Activated naive CD4-positive, alpha-beta T cell treated with anti-CD3 and anti-CD28 coated beads, Interleukin-2, amount 10 ng/mL, durations not matched to agents 7 days and 5 days (primary cell): ENCODE measurements at regions of chr2 and their contacts with region 1.

Region 1: GRCh38 chr2:54522624-54523281 is 66.6 kb downstream of the SPTBN1 start:
- DNase-seq: peak; percentile 74
- H3K4me3 Mint-ChIP-seq: peak overlapping the region; percentile 27
- H3K27ac Mint-ChIP-seq: peak overlapping the region; percentile 67
- H3K4me1 Mint-ChIP-seq: peaks cover 19% of the 10 kb centered on the region
- H3K27me3 Mint-ChIP-seq: peaks cover 17% of the 10 kb centered on the region

Region 2: DNA sequence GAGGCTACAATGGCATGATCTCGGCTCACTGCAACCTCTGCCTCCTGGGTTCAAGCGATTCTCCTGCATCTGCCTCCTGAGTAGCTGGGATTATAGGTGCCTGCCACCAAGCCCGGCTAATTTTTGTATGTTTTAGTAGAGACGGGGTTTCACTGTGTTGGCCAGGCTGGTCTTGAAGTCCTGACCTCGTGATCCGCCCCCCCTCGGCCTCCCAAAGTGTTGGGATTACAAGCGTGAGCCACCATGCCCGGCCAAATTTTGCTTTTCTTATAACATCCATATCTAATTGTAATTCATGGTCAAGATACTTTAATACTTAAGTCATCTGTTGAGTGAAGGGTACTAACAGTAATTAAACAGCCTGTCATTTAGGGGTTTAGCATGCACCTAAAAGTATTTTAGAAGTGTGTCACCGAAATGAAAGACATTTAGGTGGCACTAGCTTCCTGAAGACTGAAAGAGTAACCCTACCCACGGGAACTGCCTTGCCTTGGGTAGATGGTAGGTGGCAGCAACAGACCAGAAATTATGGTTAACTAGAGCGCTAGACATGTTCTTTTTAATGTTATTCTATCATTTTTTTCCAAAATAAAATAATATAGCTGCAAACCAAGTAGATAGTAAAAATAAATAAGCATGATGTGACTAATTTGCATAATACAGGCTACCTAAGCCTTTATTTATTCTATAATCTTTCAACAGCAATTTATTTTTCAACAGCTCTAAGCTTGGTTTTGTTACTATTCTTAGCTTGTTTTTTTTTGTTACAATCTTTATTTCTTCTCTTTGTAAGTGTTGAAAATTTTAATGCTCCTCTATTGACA is 415.9 kb before region 1 on chr2:
- CTCF ChIA-PET with region 1: interaction called, 12 read pairs
- DNase-seq: peak; percentile 56
- H3K4me3 Mint-ChIP-seq: no peak overlapping the region
- H3K27ac Mint-ChIP-seq: no peak overlapping the region
- H3K4me1 Mint-ChIP-seq: peaks cover 9% of the 10 kb centered on the region
- H3K27me3 Mint-ChIP-seq: peaks cover 17% of the 10 kb centered on the region

Region 3: DNA sequence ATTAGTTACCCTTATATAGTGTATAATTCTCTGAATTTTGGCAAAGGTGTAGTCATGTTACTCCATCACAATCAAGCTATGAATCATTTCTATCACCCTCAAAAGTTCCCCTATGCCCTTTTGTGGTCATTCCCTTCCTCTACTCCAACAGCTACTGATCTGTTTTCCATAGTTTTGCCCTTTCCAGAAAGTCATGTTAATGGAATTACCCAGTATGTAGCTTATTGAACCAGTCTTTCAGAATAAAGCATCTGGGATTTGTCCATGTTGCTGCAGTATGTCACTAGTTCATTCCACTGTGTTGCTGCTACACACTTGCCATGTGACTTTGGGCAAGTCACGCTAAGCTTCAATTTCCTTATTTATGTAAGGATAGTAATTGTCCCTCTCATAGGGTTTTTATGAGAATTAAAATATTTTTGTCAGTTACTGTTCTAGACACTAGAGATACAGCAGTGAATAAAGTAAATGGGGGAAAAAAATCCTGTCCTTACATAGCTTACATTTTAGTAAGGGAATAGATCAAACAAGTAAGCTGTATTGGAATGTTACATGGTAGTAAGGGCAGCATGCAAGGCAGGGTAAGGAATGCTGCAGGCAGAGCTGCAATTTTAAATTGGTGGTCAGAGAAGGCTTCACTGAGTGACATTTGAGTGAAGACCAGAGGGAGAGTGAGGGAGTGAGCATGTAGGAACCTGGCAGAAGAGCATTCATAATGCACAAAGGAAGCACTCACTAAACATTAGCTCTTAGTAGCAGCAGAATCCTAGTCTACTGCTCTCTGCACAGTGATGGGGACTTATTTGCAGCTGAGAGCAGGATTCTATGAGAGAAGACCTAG is 186.4 kb before region 1 on chr2:
- CTCF ChIA-PET with region 1: no interaction called
- DNase-seq: no peak
- H3K4me3 Mint-ChIP-seq: no peak overlapping the region
- H3K27ac Mint-ChIP-seq: no peak overlapping the region
- H3K4me1 Mint-ChIP-seq: peaks cover under 1% of the 10 kb centered on the region
- H3K27me3 Mint-ChIP-seq: peaks cover 11% of the 10 kb centered on the region

Region 4: GRCh38 chr2:54558188-54559005 is 35.6 kb after region 1 on chr2:
- CTCF ChIA-PET with region 1: interaction called, 36 read pairs
- DNase-seq: peak; percentile 88
- H3K4me3 Mint-ChIP-seq: peak overlapping the region; percentile 91
- H3K27ac Mint-ChIP-seq: peak overlapping the region; percentile 91
- H3K4me1 Mint-ChIP-seq: peaks cover 38% of the 10 kb centered on the region
- H3K27me3 Mint-ChIP-seq: peaks cover 10% of the 10 kb centered on the region

Region 5: DNA sequence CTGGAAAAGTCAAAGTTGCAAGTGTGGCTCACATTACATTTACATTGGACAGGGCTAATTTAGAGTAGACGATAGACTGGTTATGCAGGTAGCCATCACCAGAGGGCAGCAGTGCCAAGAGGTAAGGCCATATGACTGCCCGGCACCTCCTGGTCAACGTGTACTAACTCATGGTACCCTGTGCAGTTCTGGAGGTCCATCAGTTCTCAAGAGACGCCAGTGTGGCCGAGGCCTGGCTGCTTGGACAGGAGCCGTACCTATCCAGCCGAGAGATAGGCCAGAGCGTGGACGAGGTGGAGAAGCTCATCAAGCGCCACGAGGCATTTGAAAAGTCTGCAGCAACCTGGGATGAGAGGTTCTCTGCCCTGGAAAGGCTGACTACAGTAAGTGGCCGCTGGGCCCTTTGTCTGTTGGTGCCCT is 134.9 kb after region 1 on chr2:
- CTCF ChIA-PET with region 1: interaction called, 28 read pairs
- DNase-seq: peak; percentile 48
- H3K4me3 Mint-ChIP-seq: no peak overlapping the region
- H3K27ac Mint-ChIP-seq: no peak overlapping the region
- H3K4me1 Mint-ChIP-seq: peaks cover 14% of the 10 kb centered on the region
- H3K27me3 Mint-ChIP-seq: no peaks in the 10 kb centered on the region

Region 6: GRCh38 chr2:54704688-54705605 is 182.2 kb after region 1 on chr2:
- CTCF ChIA-PET with region 1: interaction called, 104 read pairs
- DNase-seq: no peak
- H3K4me3 Mint-ChIP-seq: no peak overlapping the region
- H3K27ac Mint-ChIP-seq: no peak overlapping the region
- H3K4me1 Mint-ChIP-seq: peaks cover 13% of the 10 kb centered on the region
- H3K27me3 Mint-ChIP-seq: peaks cover 24% of the 10 kb centered on the region

Region 7: DNA sequence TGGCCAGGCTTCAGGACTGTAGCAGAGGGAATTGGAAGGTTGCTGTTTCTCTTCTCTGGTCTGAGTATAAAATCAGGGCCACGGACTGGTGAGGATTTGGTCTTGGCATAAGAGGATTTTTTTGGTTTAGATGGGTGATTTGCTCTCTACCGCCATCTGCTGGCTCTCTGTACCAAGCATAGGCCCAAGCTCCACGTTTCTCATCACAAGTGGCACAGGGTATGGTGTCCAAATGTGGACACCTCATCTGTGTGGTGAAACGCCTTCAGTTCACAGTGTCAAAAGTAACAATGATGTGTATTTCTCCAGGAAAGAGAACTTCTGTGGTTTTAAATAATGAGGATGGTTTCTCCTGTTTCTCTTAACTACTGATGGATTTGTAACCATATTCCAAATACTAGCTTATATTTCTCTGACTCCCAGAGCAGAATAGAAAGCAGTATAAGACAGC is 315.9 kb after region 1 on chr2:
- CTCF ChIA-PET with region 1: interaction called, 10 read pairs
- DNase-seq: peak; percentile 70
- H3K4me3 Mint-ChIP-seq: no peak overlapping the region
- H3K27ac Mint-ChIP-seq: no peak overlapping the region
- H3K4me1 Mint-ChIP-seq: no peaks in the 10 kb centered on the region
- H3K27me3 Mint-ChIP-seq: peaks cover 14% of the 10 kb centered on the region